ENCODE measurements at regions of chr11 and their contacts with region 1.

Region 1: GRCh38 chr11:3217676-3218482 is 734 bp downstream of the MRGPRG start:
- DNase-seq: no peak
- ATAC-seq: no peak
- H3K4me3 ChIP-seq: no peak overlapping the region
- H3K27ac ChIP-seq: no peak overlapping the region
- H3K4me1 ChIP-seq: no peaks in the 10 kb centered on the region
- H3K27me3 ChIP-seq: peaks cover 30% of the 10 kb centered on the region
- CTCF ChIP-seq: no peak

Region 2: DNA sequence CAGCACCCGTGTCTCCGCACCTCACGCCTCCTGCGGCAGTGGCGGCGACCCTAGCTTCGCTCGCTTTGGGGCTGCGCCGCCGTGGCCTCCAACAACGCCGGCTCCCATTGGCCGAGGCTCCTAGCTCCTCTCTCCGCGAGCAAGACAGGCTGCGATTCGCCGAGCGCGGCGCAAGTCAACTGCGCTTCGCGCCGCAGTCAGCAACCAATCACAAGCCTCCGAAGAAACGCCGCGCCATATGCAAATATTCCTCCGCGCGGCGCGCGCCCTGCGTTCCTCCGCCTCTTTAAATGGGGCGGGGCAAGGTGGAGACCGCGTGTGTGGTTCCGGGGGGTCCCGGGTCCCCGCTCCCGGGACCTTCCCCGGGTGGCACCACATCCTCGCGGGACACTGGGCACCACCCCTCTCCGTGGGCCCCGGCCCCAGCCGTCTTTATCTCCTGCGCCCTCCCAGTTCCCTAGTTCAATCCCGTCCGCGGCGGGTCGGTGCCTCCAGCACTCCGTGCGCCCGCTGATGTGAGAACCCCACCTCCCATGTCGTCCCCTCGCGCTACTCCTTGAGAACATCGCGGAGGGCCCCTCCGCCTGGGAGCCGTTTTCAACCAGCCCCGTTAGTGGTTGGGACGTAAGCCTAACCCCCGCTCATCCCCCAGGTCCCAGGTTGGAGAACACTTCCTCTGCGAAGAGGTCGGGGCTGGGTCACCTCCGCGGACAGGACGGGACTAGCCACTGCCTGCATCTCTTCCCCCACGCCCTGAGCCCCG is 225.5 kb before region 1 on chr11 and contains the start of gene NAP1L4:
- CTCF ChIA-PET with region 1: no interaction called
- POLR2A ChIA-PET with region 1: no interaction called
- intact Hi-C with region 1: loop called (anchors 5 kb)
- DNase-seq: peak; percentile 98
- ATAC-seq: peak; percentile 82
- H3K4me3 ChIP-seq: peak within 1 kb of the TSS; percentile 94
- H3K27ac ChIP-seq: peak within 1 kb of the TSS; percentile 61
- H3K4me1 ChIP-seq: peaks cover 23% of the 10 kb centered on the region
- H3K27me3 ChIP-seq: no peaks in the 10 kb centered on the region
- CTCF ChIP-seq: no peak
- total RNA-seq, gene NAP1L4: 115 and 160 TPM in 2 replicates

Region 3: DNA sequence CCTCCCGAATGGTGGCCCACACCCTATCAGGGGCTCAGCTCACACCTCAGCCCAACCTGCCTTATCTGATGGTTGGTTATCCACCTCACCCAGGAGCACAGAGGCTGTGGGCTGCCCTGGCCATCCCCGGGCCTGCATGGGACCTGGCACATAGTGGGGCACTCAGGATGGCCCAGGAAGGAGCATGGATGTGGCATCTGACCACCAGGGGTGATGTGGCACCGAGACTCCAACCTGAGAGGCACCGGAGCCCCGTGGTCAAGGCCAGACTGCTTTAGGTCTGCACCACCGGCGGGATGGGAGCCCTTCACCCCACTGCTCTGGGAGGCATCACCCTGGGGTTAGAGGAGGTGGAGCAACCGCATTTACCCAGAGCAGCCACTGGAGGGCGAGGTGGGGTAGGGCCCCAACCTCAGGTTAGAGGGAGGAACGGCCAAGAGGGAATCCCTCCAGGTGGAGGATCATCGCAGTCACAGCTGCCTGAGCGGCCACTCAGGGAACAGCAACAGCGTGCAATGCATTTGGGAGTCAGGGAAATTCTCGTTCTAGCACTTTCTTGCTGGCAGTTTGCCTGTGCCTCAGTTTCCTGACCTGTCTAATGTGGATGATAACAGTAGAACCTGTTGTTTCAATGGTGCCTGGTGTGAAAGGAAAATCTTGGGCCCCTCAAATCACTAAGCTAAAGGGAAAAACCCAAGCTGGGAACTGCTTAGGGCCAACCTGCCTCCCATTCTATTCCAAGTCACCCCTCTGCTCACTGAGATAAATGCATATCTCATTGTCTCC is 107.8 kb before region 1 on chr11:
- CTCF ChIA-PET with region 1: interaction called, 3 read pairs
- POLR2A ChIA-PET with region 1: no interaction called
- intact Hi-C with region 1: loop called (anchors 5 kb)
- DNase-seq: peak; percentile 61
- ATAC-seq: peak; percentile 84
- H3K4me3 ChIP-seq: no peak overlapping the region
- H3K27ac ChIP-seq: no peak overlapping the region
- H3K4me1 ChIP-seq: no peaks in the 10 kb centered on the region
- H3K27me3 ChIP-seq: no peaks in the 10 kb centered on the region
- CTCF ChIP-seq: peak; percentile 69